Ascending aorta (tissue), 2 donors: ENCODE measurements at regions of chr1 and their contacts with region 1.

Region 1: DNA sequence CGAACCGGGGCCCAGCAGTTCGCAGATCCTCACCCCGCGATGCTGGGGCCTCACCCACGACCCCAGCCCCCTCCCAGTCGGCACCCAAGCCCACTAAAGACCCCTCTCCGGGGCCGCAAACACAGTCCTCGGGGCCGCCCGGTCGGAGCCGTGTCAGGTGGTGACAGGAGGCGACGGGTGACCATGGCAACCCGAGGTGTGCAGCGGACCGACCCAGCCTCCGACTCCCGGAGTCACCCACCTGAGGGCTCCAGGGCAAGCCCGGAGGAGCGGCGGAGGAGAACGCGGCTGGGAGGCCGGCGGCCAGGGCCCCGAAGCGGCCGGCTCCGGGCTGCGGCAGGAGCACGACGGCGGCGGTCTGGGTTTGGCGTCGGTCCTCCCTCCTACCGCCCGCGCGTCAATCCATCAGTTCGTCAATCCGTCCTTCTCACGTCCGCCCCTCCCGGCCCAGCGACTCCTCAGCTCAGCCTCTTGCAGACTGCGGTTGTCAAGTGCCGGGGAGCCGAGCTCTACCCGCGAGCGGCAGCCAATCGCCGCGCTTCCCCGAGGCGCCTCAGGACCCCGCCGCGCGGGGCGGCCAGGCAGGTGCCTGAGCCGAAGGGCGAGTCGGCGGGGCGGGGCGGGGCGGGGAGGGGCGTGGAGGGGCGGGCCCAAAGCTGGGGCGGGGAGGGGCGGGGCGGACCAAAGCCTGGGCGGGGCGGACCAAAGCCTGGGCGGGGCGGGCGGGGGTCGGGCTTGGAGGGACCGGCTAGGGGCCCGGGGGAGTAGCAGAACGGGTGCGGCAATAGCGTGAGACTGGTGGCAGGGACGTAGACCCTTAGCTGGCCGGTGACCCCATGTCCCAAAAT is at the start of gene WDR47:
- DNase-seq: peak; percentile 84 to 97
- H3K4me3 ChIP-seq: peak within 1 kb of the TSS; percentile 78 to 94
- H3K27ac ChIP-seq: peak within 1 kb of the TSS; percentile 83 to 86
- H3K4me1 ChIP-seq: peaks cover 0 to 5% of the 10 kb centered on the region in 2 donors
- H3K27me3 ChIP-seq: no peaks in the 10 kb centered on the region
- CTCF ChIP-seq: no peak
- total RNA-seq, gene WDR47: 11.8 TPM

Region 2: GRCh38 chr1:108963052-108963686 is 78.7 kb before region 1 on chr1 and contains the start of gene CLCC1:
- intact Hi-C with region 1: loop called (anchors 2 kb)
- DNase-seq: peak; percentile 71 to 96
- H3K4me3 ChIP-seq: peak within 1 kb of the TSS; percentile 76 to 91
- H3K27ac ChIP-seq: peak within 1 kb of the TSS; percentile 93 to 97
- H3K4me1 ChIP-seq: peaks cover 11 to 13% of the 10 kb centered on the region in 2 donors
- H3K27me3 ChIP-seq: no peaks in the 10 kb centered on the region
- CTCF ChIP-seq: no peak
- total RNA-seq, gene CLCC1: 18.1 TPM

Region 3: GRCh38 chr1:108976658-108977057 is 65.2 kb before region 1 on chr1:
- intact Hi-C with region 1: no loop called
- DNase-seq: no peak
- H3K4me3 ChIP-seq: no peak overlapping the region
- H3K27ac ChIP-seq: no peak overlapping the region
- H3K4me1 ChIP-seq: no peaks in the 10 kb centered on the region
- H3K27me3 ChIP-seq: no peaks in the 10 kb centered on the region
- CTCF ChIP-seq: no peak

Region 4: GRCh38 chr1:109090196-109091077 is 48.6 kb after region 1 on chr1 and contains the start of gene TMEM167B:
- intact Hi-C with region 1: loop called (anchors 5 kb)
- DNase-seq: peak; percentile 64 to 95
- H3K4me3 ChIP-seq: peak within 1 kb of the TSS; percentile 61 to 72
- H3K27ac ChIP-seq: peak within 1 kb of the TSS; percentile 91 to 95
- H3K4me1 ChIP-seq: peaks cover 5 to 29% of the 10 kb centered on the region in 2 donors
- H3K27me3 ChIP-seq: no peaks in the 10 kb centered on the region
- CTCF ChIP-seq: no peak
- total RNA-seq, gene TMEM167B: 20.5 TPM

Region 5: DNA sequence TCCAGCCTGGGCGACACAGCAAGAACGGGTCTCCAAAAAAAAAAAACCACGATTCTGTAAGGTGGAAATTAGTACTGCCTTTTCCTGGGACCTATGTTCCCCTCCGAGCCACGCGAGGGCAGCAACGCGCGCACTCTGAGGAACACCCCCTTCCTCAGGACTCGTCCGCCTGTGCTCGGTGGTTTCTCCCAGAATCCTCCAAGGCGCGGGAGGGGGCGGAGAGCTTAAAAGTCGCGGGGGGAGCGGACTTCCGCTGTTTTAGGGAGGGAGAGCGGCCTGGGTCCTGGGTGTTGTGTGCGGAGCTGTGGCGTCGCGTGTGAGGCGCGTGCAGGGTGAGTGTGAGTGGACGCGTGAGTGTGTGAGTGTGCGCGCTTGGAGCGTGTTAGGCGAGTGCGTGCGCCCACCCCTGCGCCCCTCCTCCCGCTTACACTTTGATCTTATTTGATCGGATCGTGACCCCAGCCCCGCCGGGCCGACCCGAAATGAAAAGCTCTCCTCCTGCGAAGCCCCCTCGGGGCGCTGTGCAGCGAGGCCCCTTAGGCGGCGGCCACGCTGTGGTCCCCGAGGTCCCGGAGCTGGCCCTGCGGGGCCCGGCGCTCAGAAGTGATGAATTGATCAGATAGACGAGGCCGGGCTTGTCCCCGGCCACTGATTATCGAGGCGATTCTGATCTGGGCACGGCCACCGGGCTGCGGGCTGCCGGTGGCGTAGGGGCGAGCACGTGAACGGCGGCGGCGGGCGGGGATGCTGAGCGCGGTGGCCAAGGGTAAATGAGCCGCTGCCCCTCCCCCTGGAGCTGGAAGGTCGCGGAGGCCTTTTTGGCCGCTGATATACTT is 58.3 kb after region 1 on chr1:
- intact Hi-C with region 1: loop called (anchors 2 kb)
- DNase-seq: peak; percentile 87 to 99
- H3K4me3 ChIP-seq: peak overlapping the region; percentile 79 to 90
- H3K27ac ChIP-seq: peak overlapping the region; percentile 96
- H3K4me1 ChIP-seq: peaks cover 0 to 2% of the 10 kb centered on the region in 2 donors
- H3K27me3 ChIP-seq: no peaks in the 10 kb centered on the region
- CTCF ChIP-seq: peak; percentile 68 to 92 (median 87)